GM10248 (cell line): ENCODE measurements at regions of chr17 and their contacts with region 1.

Region 1: GRCh38 chr17:8409966-8410864 is 12.6 kb upstream of the RNF222 start:
- DNase-seq: peak; percentile 71
- CTCF ChIP-seq: peak; percentile 76

Region 2: GRCh38 chr17:8393420-8394241 is 16.6 kb before region 1 on chr17:
- CTCF ChIA-PET with region 1: interaction called, 15 read pairs
- POLR2A ChIA-PET with region 1: no interaction called
- DNase-seq: no peak
- CTCF ChIP-seq: no peak

Region 3: DNA sequence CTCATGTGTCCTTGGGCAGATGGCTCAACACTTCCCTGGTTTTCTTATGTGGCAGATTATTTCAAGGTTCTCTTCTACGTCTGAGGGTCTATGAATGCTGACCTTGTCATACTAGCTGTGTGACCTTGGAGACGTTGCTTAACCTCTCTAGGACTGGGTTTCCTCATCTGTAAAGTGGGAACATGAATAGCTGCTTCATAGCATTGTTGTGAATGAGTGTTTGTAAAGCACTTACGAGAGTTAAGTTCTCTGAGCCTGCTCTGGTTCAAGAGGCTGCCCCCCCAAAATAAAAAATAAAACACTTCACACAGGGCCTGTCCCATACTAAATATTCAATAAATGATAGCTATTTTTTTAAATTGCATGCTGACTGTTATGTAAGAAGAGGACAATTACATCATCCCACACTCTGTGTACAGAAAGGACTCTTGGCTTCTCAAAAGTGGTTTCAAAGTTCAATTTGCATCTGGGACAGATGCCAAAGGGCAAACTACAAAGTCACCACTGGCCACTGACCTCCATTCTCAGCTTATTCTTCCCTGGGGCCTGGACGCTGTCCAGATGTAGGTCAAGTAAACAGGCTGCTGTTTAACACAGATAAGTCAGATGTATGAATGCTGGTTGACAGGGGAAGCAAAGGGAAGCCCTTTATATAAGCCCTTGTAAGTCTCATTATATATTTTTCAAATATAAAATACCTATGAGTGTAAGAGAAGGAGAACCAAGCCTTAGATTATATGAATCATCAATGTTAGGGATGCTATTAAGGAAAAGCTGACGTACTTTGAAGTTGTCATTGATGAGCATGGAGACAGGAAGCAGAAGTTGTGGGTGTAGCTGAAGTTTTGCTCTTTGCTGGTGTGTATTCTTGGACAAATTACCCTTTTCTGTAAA is 10.1 kb after region 1 on chr17:
- CTCF ChIA-PET with region 1: interaction called, 26 read pairs
- POLR2A ChIA-PET with region 1: no interaction called
- DNase-seq: no peak
- CTCF ChIP-seq: no peak

Region 4: GRCh38 chr17:8430966-8431365 is 20.8 kb after region 1 on chr17:
- CTCF ChIA-PET with region 1: interaction called, 11 read pairs
- POLR2A ChIA-PET with region 1: no interaction called
- DNase-seq: no peak
- CTCF ChIP-seq: no peak

Region 5: GRCh38 chr17:8581002-8581658 is 170.9 kb after region 1 on chr17:
- CTCF ChIA-PET with region 1: no interaction called
- POLR2A ChIA-PET with region 1: no interaction called
- DNase-seq: peak; percentile 39
- CTCF ChIP-seq: no peak

Region 6: DNA sequence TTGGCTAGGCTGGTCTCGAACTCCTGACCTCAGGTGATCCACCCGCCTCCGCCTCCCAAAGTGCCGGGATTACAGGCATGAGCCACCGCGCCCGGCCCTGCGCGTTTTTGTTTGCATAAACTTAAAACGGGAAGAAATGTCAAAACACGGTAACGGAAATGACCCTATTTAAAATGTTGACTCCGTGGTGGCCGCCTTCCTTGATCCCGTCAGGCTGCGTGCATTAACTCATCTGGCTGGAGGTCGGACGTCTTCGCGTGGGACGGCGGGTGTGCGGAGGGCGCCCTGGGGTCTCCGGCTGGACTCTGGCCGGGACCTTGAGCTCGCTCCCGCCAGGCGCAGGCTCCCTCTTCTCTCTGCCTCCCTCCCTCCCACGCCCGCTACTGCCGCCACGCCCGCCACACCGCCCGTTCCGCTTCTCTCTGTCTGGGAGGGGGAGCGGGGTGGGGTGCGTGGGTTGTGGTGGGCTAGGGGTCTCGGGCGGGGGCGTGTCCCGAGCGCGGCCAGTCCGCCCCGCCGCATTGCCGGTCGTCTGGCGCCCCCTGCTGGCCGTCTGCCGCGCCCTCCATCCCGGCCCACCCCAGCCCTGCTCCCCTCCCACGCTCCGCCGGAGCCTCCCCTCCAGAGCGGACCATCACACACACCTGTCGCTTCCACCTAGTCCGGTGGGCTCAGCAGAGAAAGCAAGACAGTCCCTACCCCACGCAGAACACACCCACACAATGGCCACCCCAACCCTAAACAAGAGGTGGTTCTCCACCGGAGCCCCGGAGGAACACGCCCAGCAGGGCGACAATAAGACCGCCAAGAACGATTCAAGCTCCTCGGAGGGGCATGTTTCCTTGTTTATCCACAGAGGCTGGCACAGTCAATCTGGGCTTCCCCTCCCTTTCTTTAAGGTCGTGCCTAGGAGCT is 335.6 kb after region 1 on chr17:
- CTCF ChIA-PET with region 1: interaction called, 53 read pairs
- POLR2A ChIA-PET with region 1: no interaction called
- DNase-seq: peak; percentile 92
- CTCF ChIP-seq: peak; percentile 79